ENCODE measurements at regions of chr17 and their contacts with region 1.

Region 1: GRCh38 chr17:50114849-50115357 is 15.1 kb downstream of the SAMD14 start:
- DNase-seq: peak in 5 of 9 experiments; percentile 30 to 69 (median 45)
- ATAC-seq: peak; percentile 56
- H3K4me3 ChIP-seq: no peak overlapping the region
- H3K4me3 Mint-ChIP-seq: no peak overlapping the region
- H3K27ac ChIP-seq: no peak overlapping the region
- H3K27ac Mint-ChIP-seq: no peak overlapping the region
- H3K4me1 ChIP-seq: peaks cover 14% of the 10 kb centered on the region
- H3K4me1 Mint-ChIP-seq: peaks cover 13% of the 10 kb centered on the region
- H3K27me3 ChIP-seq: peaks cover 11 to 17% of the 10 kb centered on the region in 2 experiments
- H3K27me3 Mint-ChIP-seq: peaks cover 36% of the 10 kb centered on the region
- CTCF ChIP-seq: peak; percentile 56

Region 2: GRCh38 chr17:50177983-50178834 is 63.3 kb after region 1 on chr17:
- CTCF ChIA-PET with region 1: interaction called, 11 read pairs
- POLR2A ChIA-PET with region 1: no interaction called
- intact Hi-C with region 1: no loop called
- DNase-seq: peak in 7 of 9 experiments; percentile 22 to 66 (median 57)
- ATAC-seq: peak; percentile 89
- H3K4me3 ChIP-seq: no peak overlapping the region
- H3K4me3 Mint-ChIP-seq: peak overlapping the region; percentile 26
- H3K27ac ChIP-seq: no peak overlapping the region
- H3K27ac Mint-ChIP-seq: no peak overlapping the region
- H3K4me1 ChIP-seq: peaks cover 4% of the 10 kb centered on the region
- H3K4me1 Mint-ChIP-seq: peaks cover 3% of the 10 kb centered on the region
- H3K27me3 ChIP-seq: no peaks in the 10 kb centered on the region
- H3K27me3 Mint-ChIP-seq: peaks cover 2% of the 10 kb centered on the region
- CTCF ChIP-seq: no peak

Measured in CD8-positive, alpha-beta T cell (primary cell).